GM12878 (cell line): ENCODE measurements at regions of chr10 and their contacts with region 1.

Region 1: GRCh38 chr10:63629363-63630084 is 108.3 kb downstream of the REEP3 start:
- DNase-seq: peak; percentile 83
- ATAC-seq: peak; percentile 79
- H3K4me3 ChIP-seq: peak overlapping the region; percentile 87
- H3K27ac ChIP-seq: peak overlapping the region; percentile 89
- H3K4me1 ChIP-seq: peaks cover 9% of the 10 kb centered on the region; the same call in 1 of the 2 replicates
- H3K27me3 ChIP-seq: no peaks in the 10 kb centered on the region
- CTCF ChIP-seq: peak; percentile 84 to 94 (median 92)
- EP300 ChIP-seq: 0 out of 4 replicates have a peak, but pooled peaks of 1 of the 2 experiments have one; percentile 25
- POLR2A ChIP-seq: no peak
- RAD21 ChIP-seq: peak; percentile 87

Region 2: DNA sequence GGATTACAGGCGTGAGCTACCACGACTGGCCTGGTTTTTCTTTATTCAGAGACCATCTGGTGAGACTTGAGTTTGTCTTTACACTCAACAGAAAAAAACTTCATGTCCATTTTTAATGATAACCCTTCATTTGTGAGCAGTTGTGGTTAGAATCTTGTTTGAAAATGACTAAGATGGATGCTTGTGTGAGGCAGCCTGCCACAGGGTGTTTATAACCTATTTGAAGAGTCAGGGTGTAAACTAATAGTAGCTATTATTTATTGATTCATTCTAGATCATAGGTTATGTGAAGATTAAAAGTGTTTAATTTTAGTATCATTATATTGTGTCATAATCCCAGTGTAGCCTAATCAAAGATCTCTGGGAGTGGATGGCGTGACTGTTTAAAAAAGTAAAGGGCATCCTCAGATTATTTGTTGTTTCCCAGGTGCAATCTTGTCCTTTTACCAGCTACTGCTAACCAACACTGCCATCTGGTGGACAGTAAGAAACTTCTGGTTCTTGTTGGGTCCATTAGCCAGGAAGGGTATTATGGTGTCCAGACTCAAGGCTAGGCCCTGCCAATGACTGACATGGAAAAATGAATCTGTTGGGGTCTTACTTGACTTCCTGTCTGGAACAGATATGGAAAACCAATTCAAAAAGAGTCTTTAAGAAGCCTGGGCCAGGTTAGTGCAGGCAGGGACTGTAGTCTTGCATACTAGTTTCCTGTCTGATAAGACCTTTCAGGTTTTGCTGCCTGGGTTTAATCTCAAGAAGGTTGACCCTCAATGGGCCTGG is 471.5 kb before region 1 on chr10:
- CTCF ChIA-PET with region 1: interaction called, 14 read pairs
- POLR2A ChIA-PET with region 1: interaction called, 3 read pairs
- RAD21 ChIA-PET with region 1: interaction called, 14 read pairs
- SMC1A ChIA-PET with region 1: interaction called, 23 read pairs
- in situ Hi-C with region 1: no loop called
- intact Hi-C with region 1: no loop called
- DNase-seq: peak; percentile 49
- ATAC-seq: peak; percentile 89
- H3K4me3 ChIP-seq: no peak overlapping the region
- H3K27ac ChIP-seq: 0 out of 2 replicates have a peak overlapping the region, but pooled peaks have one; percentile 31
- H3K4me1 ChIP-seq: peaks cover 3% of the 10 kb centered on the region; the same call in 1 of the 2 replicates
- H3K27me3 ChIP-seq: no peaks in the 10 kb centered on the region
- CTCF ChIP-seq: peak; percentile 70 to 86 (median 74); a peak in 5 of 6 replicates
- EP300 ChIP-seq: no peak
- POLR2A ChIP-seq: no peak
- RAD21 ChIP-seq: peak; percentile 97

Region 3: DNA sequence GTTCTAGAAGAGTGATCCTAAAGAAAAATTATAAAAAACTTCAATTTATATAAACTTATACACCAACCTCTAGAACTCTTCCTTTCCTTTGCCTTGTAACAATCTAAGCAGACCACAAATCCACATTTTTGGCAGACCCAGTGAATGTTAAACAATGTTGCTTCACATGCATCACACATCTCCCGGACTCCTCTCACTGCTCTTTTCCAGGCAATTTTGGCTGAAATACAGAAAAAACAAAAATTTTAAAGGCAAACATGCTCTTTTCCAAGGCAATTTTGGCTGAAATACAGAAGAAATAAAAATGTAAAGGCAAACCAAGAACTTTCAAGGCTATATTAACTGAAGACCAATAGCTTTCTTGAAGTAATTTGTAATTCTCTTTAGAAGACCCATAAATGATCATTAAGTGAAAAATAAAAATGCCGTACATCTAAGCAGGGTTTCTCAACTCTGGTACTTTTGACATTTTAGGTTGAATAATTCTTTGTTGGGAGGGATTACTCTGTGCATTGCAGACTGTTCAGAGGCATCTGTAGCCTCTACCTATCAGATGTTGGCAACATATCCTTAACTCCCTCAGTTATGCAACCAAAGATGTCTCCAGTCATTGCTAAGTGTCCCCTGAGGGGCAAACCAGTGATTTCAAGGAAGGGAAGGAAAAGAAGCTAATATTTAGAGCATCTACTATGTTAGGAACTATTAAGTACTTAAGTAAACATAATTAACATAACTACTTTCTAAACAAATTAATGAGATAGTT is 432.0 kb before region 1 on chr10:
- CTCF ChIA-PET with region 1: interaction called, 8 read pairs
- POLR2A ChIA-PET with region 1: no interaction called
- RAD21 ChIA-PET with region 1: interaction called, 3 read pairs
- SMC1A ChIA-PET with region 1: interaction called, 23 read pairs
- in situ Hi-C with region 1: no loop called
- intact Hi-C with region 1: no loop called
- DNase-seq: no peak
- ATAC-seq: no peak
- H3K4me3 ChIP-seq: no peak overlapping the region
- H3K27ac ChIP-seq: no peak overlapping the region
- H3K4me1 ChIP-seq: no peaks in the 10 kb centered on the region
- H3K27me3 ChIP-seq: no peaks in the 10 kb centered on the region
- CTCF ChIP-seq: no peak
- EP300 ChIP-seq: no peak
- POLR2A ChIP-seq: no peak
- RAD21 ChIP-seq: no peak

Region 4: DNA sequence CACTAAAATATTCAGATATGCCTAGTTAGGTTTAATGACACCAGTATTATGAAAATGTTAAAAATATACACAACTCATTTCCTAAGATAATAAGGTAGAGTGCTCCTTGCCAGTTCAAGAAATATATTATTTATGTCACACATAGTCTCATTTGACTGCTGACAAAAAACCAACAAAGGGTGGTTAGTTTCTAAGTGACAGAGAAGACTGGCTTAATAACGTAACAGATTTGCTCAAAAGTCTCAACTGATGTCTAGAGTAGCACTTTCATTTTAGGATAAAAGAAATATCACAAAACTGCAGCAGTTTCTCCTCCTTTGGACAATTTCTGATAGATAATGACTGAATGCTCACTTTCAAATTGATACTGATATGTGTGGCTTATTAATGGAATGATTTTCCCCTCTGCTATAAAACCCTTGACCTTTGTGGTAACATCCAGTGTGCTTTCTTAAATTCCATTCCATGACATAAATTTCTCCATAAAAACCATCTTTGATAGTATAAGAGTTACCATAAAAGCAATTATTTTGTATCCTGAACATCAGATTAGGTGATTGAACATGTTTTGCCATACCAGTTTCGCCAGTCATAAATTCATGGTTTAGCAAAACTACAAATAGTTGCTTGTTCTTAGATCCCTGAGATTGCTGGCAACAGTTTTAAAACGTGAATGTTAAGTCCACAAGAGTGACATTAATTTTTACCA is 402.2 kb before region 1 on chr10:
- CTCF ChIA-PET with region 1: interaction called, 90 read pairs
- POLR2A ChIA-PET with region 1: interaction called, 3 read pairs
- RAD21 ChIA-PET with region 1: interaction called, 4 read pairs
- SMC1A ChIA-PET with region 1: interaction called, 19 read pairs
- in situ Hi-C with region 1: no loop called
- intact Hi-C with region 1: no loop called
- DNase-seq: no peak
- ATAC-seq: peak; percentile 79
- H3K4me3 ChIP-seq: no peak overlapping the region
- H3K27ac ChIP-seq: peak overlapping the region; percentile 66
- H3K4me1 ChIP-seq: peaks cover 27% of the 10 kb centered on the region
- H3K27me3 ChIP-seq: no peaks in the 10 kb centered on the region
- CTCF ChIP-seq: no peak
- EP300 ChIP-seq: no peak
- POLR2A ChIP-seq: no peak
- RAD21 ChIP-seq: no peak

Region 5: GRCh38 chr10:63286754-63287264 is 342.7 kb before region 1 on chr10:
- CTCF ChIA-PET with region 1: interaction called, 3 read pairs
- POLR2A ChIA-PET with region 1: no interaction called
- RAD21 ChIA-PET with region 1: interaction called, 15 read pairs
- SMC1A ChIA-PET with region 1: interaction called, 12 read pairs
- in situ Hi-C with region 1: no loop called
- intact Hi-C with region 1: no loop called
- DNase-seq: peak; percentile 66
- ATAC-seq: peak; percentile 83
- H3K4me3 ChIP-seq: peak overlapping the region; percentile 19; the same call in 1 of the 2 replicates
- H3K27ac ChIP-seq: peak overlapping the region; percentile 73
- H3K4me1 ChIP-seq: peaks cover 32% of the 10 kb centered on the region
- H3K27me3 ChIP-seq: no peaks in the 10 kb centered on the region
- CTCF ChIP-seq: no peak
- EP300 ChIP-seq: peak; percentile 24 to 69; a peak in 1 of 4 replicates
- POLR2A ChIP-seq: no peak
- RAD21 ChIP-seq: no peak

Region 6: GRCh38 chr10:63465293-63466143 is 164.0 kb before region 1 on chr10 and contains the start of gene JMJD1C:
- CTCF ChIA-PET with region 1: interaction called, 3 read pairs
- POLR2A ChIA-PET with region 1: no interaction called
- RAD21 ChIA-PET with region 1: interaction called, 17 read pairs
- SMC1A ChIA-PET with region 1: interaction called, 7 read pairs
- in situ Hi-C with region 1: no loop called
- intact Hi-C with region 1: loop called (anchors 2 kb)
- DNase-seq: no peak
- ATAC-seq: peak; percentile 85
- H3K4me3 ChIP-seq: peak within 1 kb of the TSS; percentile 87
- H3K27ac ChIP-seq: peak within 1 kb of the TSS; percentile 77
- H3K4me1 ChIP-seq: peaks cover 3% of the 10 kb centered on the region; the same call in 1 of the 2 replicates
- H3K27me3 ChIP-seq: no peaks in the 10 kb centered on the region
- CTCF ChIP-seq: 0 out of 6 replicates have a peak, but pooled peaks of 1 of the 3 experiments have one; percentile 9
- EP300 ChIP-seq: no peak
- POLR2A ChIP-seq: peak; percentile 91
- RAD21 ChIP-seq: 0 out of 2 replicates have a peak, but pooled peaks have one; percentile 20
- polyA plus RNA-seq, gene JMJD1C: 31.2 to 42.6 TPM

Region 7: DNA sequence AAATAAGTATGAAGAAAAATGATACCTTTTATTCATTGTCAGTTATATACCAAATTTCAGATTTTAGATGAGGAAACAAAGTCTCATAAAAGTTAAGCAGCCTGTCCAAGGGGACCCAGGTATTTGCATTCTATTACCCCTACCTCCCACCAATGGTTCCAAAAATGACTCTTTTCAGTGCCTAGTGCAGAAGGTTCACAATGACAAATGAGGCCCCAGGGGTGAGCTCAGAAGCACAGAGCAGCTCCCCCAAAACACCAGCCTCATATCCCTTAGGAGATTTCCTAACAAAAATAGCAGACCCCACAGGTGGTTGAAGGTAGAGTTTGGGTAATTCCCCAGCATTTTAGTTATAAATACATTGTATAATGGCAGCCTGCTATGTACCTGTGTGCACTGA is 60.2 kb after region 1 on chr10:
- CTCF ChIA-PET with region 1: no interaction called
- POLR2A ChIA-PET with region 1: no interaction called
- RAD21 ChIA-PET with region 1: no interaction called
- SMC1A ChIA-PET with region 1: no interaction called
- in situ Hi-C with region 1: no loop called
- intact Hi-C with region 1: no loop called
- DNase-seq: no peak
- ATAC-seq: no peak; the same call in 2 of the 3 replicates
- H3K4me3 ChIP-seq: no peak overlapping the region
- H3K27ac ChIP-seq: no peak overlapping the region
- H3K4me1 ChIP-seq: peaks cover 5% of the 10 kb centered on the region; the same call in 1 of the 2 replicates
- H3K27me3 ChIP-seq: no peaks in the 10 kb centered on the region
- CTCF ChIP-seq: no peak
- EP300 ChIP-seq: no peak
- POLR2A ChIP-seq: no peak
- RAD21 ChIP-seq: no peak

Region 8: GRCh38 chr10:63707254-63707910 is 77.9 kb after region 1 on chr10:
- CTCF ChIA-PET with region 1: interaction called, 4 read pairs
- POLR2A ChIA-PET with region 1: interaction called, 4 read pairs
- RAD21 ChIA-PET with region 1: interaction called, 8 read pairs
- SMC1A ChIA-PET with region 1: interaction called, 10 read pairs
- in situ Hi-C with region 1: no loop called
- intact Hi-C with region 1: no loop called
- DNase-seq: peak; percentile 48
- ATAC-seq: peak; percentile 91
- H3K4me3 ChIP-seq: no peak overlapping the region
- H3K27ac ChIP-seq: no peak overlapping the region
- H3K4me1 ChIP-seq: peaks cover 17% of the 10 kb centered on the region
- H3K27me3 ChIP-seq: no peaks in the 10 kb centered on the region
- CTCF ChIP-seq: no peak
- EP300 ChIP-seq: peak; percentile 76 to 90; a peak in 3 of 4 replicates
- POLR2A ChIP-seq: no peak
- RAD21 ChIP-seq: no peak